Lower leg skin (tissue), 4 donors: ENCODE measurements at regions of chr1 and their contacts with region 1.

Region 1: DNA sequence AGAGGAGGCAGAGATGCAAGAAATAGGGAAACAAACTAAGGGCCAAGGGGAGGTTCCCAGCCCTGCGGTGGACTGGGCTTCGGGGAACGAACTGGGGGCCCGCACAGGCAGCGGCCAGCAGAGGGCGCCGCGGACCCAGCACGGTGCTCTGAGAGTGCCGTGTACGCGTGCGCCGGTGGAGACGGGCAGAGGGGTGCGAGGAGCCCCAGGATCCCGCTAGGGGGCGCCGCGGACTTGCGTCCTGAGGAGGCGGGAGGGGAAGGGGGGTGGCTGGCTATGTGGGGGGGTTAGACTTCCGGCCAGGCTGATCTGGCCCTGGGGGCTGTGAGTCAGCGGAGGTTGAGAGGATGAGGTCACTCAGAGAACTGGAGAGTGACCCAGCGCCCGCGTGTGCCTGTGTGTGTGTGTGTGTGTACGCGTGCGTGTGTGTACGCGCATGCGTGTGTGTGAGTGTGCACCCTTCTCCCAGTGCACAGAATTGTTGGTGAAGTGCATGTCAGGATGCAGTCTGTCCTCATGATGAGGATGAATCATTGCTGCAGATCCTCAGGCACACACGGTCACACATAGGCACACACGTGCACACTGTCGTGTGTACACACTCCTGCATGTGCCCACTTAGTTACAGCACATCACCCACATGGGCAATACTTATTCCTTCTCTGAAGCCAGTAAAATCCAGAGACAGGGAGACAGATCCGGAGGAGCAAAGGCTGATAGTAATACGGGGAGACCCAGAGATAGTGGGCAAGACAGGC is 17.0 kb downstream of the NES start:
- DNase-seq: peak; percentile 89 to 99
- H3K4me3 ChIP-seq: no peak overlapping the region
- CTCF ChIP-seq: peak in 2 of 3 donors; percentile 68 to 93
- POLR2A ChIP-seq: no peak

Region 2: GRCh38 chr1:156623946-156624813 is 36.0 kb before region 1 on chr1:
- intact Hi-C with region 1: loop called (anchors 5 kb)
- DNase-seq: peak in 1 of 2 donors; percentile 89
- H3K4me3 ChIP-seq: peak overlapping the region; percentile 7
- CTCF ChIP-seq: no peak
- POLR2A ChIP-seq: no peak